Ovary (tissue), 10 donors: ENCODE measurements at regions of chr3 and their contacts with region 1.

Region 1: DNA sequence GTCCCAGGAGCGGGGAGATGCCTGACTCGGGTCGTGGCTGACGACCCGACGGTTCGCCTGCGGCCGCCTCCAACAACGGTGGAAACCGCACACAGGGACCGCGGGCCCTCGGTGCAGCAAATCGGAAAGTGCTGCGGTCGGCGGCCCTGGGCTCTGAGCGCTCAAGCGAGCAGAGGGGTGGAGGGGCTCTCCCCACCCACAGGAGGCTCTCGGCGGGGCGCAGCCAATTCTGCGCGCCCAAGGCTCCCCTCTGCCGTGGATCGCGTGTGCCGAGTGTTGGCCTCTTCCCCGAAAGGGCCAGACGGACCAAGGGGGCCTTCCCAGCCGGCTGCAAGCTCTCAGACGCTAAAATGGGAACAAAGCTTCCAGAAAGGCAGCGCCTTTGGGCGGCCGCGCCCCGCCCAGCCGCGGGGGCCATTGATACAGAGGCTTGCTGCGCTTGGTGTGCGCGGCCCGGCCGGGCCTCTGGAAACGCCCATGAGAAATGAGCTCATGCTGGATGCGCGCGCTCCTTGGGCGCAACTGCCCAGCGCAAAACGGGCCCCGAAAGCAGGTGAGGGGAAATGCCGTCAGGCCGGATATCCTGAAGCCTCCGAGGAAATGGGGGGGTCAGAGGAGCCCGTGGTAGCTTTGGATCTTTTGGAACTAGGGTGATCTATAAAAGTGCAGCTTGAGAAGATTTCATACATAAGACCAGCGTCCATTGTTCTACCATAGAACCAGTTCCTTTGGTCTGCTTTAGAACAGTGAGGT is 1.2 kb upstream of the GSK3B start:
- DNase-seq: peak; percentile 87 to 93 (median 90)
- H3K4me3 ChIP-seq: peak overlapping the region; percentile 63
- H3K27ac ChIP-seq: peak overlapping the region; percentile 97 to 98
- H3K4me1 ChIP-seq: peaks cover 5% of the 10 kb centered on the region
- H3K27me3 ChIP-seq: no peaks in the 10 kb centered on the region
- CTCF ChIP-seq: peak in 2 of 3 donors; percentile 9 to 17
- EP300 ChIP-seq: no peak
- POLR2A ChIP-seq: peak; percentile 96

Region 2: DNA sequence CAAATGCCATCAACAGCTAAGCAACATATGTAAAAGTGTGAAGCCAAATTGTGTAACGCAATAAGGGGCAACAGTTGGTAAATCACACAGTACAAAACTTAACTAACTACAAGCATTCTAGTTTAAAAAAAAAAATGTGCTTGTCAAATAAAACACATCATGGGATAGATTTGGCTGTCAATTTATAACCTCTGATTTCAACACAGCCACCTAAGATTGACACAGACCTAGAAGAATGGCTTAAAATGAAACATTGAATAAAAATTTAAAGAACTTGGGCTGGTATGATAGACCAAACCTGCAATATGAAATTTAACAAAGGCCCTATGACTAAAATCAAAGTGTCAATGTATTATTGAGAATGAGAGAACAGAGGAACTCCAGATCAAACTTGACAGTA is 165.1 kb before region 1 on chr3:
- intact Hi-C with region 1: no loop called
- DNase-seq: no peak
- H3K4me3 ChIP-seq: no peak overlapping the region
- H3K27ac ChIP-seq: no peak overlapping the region
- H3K4me1 ChIP-seq: no peaks in the 10 kb centered on the region
- H3K27me3 ChIP-seq: no peaks in the 10 kb centered on the region
- CTCF ChIP-seq: no peak
- EP300 ChIP-seq: no peak
- POLR2A ChIP-seq: no peak

Region 3: DNA sequence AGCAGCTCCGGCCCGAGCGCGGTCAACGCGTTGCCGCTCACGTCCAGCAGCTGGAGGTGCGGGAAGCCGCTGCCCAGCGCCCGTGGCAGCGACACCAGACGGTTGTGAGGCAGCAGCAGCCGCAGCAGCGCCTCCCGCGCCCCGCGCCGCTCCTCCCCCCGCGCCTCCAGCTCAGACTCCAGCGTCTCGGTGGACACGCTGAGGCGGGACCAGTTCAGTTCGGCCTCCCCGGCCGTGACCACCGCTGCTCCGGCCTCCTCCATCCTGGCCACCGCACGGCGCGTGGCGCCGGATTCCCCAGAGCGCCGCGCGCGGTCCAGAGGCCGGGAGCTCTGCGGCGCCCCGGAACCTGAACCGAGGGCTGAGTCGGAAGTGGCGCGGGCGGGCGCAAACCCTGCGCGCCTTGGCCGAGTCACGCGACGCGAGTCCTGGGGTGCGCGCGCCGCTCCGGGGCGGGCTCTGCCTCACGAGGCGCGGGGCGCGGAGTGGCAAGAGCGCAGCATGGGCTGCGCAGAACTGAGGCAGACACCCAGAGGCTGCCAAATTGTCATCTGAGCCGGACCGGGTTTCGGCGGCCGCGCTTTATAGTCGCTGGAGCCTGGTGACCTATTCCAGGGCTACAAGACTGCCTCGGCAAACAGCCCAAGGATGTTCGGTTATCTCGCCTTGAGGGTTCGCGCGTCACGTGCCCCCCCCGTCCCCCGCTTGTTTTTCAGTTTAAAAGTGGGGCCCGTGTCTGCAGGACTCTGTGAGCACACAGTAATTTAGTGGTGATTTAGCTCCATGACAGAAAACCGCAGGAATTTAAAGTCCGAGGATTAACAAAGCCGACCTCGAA is 253.8 kb after region 1 on chr3 and contains the start of gene LRRC58:
- intact Hi-C with region 1: loop called in 1 of 4 experiments (anchors 10 kb)
- DNase-seq: peak; percentile 90 to 95 (median 91)
- H3K4me3 ChIP-seq: peak within 1 kb of the TSS; percentile 68
- H3K27ac ChIP-seq: peak within 1 kb of the TSS; percentile 91 to 94
- H3K4me1 ChIP-seq: peaks cover 4% of the 10 kb centered on the region
- H3K27me3 ChIP-seq: no peaks in the 10 kb centered on the region
- CTCF ChIP-seq: peak in 2 of 3 donors; percentile 34 to 52
- EP300 ChIP-seq: no peak
- POLR2A ChIP-seq: peak; percentile 89
- total RNA-seq, gene LRRC58: 25.3 to 41.8 (median 33.1) TPM